ENCODE measurements at regions of chr10 and their contacts with region 1.

Region 1: DNA sequence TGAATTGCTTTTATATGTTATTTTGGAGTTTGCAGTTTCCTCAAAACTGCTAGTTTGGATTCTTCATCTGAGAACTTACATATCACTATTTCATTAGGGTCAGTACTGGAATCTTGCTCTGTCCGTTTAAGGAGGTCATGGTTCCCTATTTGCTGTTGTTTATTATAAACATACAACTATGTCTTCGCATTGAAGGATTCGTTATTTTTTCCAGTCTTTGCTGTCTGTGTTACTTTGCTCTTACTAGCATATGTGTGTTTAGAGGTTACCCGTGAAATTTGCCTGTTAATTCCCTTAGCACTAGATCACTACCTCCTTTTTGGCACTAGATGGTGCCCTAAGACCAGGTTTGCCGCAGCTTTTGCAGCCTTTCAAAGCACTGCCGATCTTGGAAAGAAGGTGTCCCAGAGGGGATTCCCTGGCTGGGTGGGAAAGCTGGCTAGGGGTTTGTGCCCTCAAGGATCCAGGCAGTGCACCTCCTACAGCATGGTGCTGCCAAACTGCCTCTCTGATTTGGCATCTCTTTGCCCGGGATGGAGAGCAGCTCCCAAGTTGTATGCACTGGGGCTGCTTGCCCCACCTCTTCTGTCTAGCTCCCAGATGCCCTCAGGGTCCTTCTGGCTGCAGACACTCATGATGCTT is 103.1 kb upstream of the APBB1IP start:
- DNase-seq: peak; percentile 70

Region 2: DNA sequence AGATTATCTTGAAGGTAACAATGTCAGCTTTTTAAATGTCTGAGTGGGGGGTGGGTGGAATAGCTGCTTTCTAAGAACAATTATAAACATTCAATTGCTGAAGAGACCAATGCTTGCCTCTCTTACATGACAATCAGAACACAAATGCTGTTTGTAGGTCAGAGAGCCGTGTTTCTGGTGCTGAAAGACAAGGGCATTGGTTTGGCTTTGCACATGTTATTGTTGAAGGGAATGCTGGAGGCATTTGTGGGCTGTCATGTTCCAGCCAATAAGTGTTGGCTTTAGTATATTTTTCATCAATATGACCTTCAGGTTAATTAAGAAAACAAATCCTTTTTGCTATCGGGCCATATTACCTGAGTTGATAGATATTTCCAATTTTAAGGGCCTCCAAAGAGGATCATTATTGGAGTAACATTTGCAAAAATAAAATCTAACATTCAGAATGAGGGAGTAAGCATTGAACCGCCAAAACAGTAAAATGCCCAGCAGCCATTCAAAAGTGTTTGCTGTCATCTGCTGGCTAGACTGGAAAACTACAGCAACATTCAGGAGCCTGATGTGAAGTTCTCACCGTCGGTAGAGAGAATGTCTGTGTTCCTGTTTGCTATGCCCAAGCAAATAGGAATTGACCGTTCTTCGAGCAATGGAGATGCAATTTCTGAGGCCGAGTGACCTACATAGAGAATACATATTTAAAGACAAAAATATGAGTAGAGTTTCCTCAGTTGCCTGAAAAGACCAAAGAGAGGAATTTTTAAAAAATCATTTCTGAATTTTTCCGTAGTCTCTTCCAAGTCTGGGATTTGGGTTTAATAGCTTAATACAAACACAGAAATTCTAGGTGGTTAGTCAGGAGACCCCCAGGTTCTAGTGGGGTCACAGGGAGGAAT is 221.9 kb after region 1 on chr10:
- CTCF ChIA-PET with region 1: interaction called, 42 read pairs
- POLR2A ChIA-PET with region 1: no interaction called
- DNase-seq: peak; percentile 65